SK-N-SH (cell line): ENCODE measurements at regions of chr6 and their contacts with region 1.

Region 1: DNA sequence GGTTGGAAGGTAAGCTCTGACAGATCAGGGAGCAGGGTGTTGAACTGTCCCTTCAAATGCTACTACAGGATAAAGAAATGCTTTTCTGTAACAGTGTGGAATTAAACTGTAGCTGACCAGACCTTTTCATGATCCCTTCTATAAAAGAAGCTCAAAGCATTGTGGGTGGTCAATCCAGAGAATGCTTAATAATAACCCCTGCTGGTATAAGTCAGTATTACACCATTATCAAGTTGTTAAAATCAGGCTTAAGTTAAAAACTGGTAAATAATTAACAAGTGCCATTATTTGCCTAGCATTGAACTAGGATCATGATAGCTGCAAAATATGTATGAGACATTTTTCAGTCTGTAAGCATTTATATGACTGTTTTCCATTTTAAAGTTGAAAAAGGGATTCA is 468.9 kb downstream of the PKHD1 start:
- DNase-seq: no peak
- H3K4me3 ChIP-seq: no peak overlapping the region
- H3K27ac ChIP-seq: no peak overlapping the region
- H3K4me1 ChIP-seq: no peaks in the 10 kb centered on the region; a peak in 1 of 4 replicates
- H3K27me3 ChIP-seq: no peaks in the 10 kb centered on the region
- CTCF ChIP-seq: peak; percentile 58
- EP300 ChIP-seq: no peak
- RAD21 ChIP-seq: no peak

Region 2: DNA sequence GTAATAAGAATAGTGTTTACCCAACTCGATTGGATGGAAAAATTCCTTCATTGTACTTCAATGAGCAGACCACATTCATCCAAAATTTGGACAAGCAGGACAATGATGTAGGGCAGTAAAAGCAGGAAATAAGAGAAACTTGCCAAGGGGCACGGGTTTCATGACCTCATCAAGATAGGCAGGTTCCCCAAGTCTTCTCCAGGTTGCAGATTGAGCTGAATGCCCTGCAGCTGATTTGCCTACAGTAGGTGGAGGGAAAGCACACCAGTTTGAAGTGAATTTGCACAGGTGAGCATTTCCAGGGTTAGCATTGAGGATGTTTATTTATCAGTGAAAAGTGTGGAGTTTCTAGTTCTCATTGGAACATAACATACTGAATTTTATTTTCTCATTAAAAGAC is 14.8 kb before region 1 on chr6:
- CTCF ChIA-PET with region 1: interaction called, 11 read pairs
- POLR2A ChIA-PET with region 1: no interaction called
- DNase-seq: no peak
- H3K4me3 ChIP-seq: no peak overlapping the region
- H3K27ac ChIP-seq: peak overlapping the region in 1 of 2 experiments; percentile 47; a peak in 1 of 4 replicates
- H3K4me1 ChIP-seq: peaks cover under 1 to 6% of the 10 kb centered on the region in 2 experiments; a peak in 2 of 4 replicates
- H3K27me3 ChIP-seq: no peaks in the 10 kb centered on the region
- CTCF ChIP-seq: no peak
- EP300 ChIP-seq: no peak
- RAD21 ChIP-seq: no peak

Region 3: DNA sequence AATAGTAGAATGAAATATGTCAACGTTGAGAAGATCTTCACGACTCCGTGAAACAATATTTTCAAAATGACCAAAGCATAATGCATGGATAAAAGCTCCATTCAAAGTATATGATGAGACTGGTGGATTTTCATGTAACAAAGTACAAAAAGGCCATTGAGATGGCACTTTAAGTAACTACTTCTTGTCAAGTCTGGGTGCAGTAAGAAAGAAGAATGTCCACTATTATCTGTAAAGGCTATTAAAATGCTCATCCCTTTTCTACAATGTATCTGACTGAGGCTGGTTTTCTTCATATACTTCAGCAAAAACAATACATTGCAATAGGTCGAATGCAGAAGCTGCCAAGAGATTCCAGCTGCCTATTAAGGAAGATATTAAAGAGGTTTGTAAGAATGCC is 11.4 kb after region 1 on chr6:
- CTCF ChIA-PET with region 1: interaction called, 28 read pairs
- POLR2A ChIA-PET with region 1: no interaction called
- DNase-seq: no peak
- H3K4me3 ChIP-seq: no peak overlapping the region
- H3K27ac ChIP-seq: no peak overlapping the region
- H3K4me1 ChIP-seq: no peaks in the 10 kb centered on the region; a peak in 1 of 4 replicates
- H3K27me3 ChIP-seq: no peaks in the 10 kb centered on the region
- CTCF ChIP-seq: no peak
- EP300 ChIP-seq: no peak
- RAD21 ChIP-seq: no peak